Mammary epithelial cell (primary cell): ENCODE measurements at regions of chr3 and their contacts with region 1.

Region 1: GRCh38 chr3:193190146-193190786 is 50.8 kb upstream of the PLAAT1 start:
- DNase-seq: peak; percentile 21
- H3K4me3 ChIP-seq: no peak overlapping the region
- H3K27ac ChIP-seq: no peak overlapping the region
- H3K4me1 ChIP-seq: no peaks in the 10 kb centered on the region
- H3K27me3 ChIP-seq: no peaks in the 10 kb centered on the region
- CTCF ChIP-seq: peak; percentile 46 to 73

Region 2: DNA sequence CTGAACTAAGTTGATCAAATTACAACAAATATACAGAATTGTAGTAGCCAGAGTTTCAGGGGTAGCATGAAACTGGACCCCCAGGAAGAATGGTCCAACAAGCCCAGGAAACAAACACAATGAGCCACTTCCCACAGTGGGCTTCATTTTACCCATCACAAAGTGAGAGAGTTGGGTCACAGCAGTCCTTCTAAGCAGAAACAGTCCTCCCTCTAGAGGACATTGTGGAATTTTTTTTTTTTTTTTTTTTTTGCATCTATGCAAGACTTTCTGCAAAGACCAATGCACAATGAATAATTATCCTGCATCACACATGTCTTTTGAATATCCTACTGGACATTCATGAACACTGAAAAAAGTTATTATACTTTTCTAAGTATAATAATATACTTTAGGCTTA is 262.1 kb after region 1 on chr3:
- CTCF ChIA-PET with region 1: no interaction called
- dilution Hi-C with region 1: no loop called
- in situ Hi-C with region 1: no loop called
- intact Hi-C with region 1: loop called (anchors 5 kb)
- DNase-seq: no peak
- H3K4me3 ChIP-seq: no peak overlapping the region
- H3K27ac ChIP-seq: no peak overlapping the region
- H3K4me1 ChIP-seq: peaks cover 3% of the 10 kb centered on the region
- H3K27me3 ChIP-seq: peaks cover 3% of the 10 kb centered on the region
- CTCF ChIP-seq: peak; percentile 13 to 56

Region 3: GRCh38 chr3:193465992-193466608 is 275.8 kb after region 1 on chr3:
- CTCF ChIA-PET with region 1: no interaction called
- dilution Hi-C with region 1: no loop called
- in situ Hi-C with region 1: no loop called
- intact Hi-C with region 1: loop called (anchors 5 kb)
- DNase-seq: no peak
- H3K4me3 ChIP-seq: no peak overlapping the region
- H3K27ac ChIP-seq: no peak overlapping the region
- H3K4me1 ChIP-seq: no peaks in the 10 kb centered on the region
- H3K27me3 ChIP-seq: peaks cover 4% of the 10 kb centered on the region
- CTCF ChIP-seq: no peak